GM12878 (cell line): ENCODE measurements at regions of chr2 and their contacts with region 1.

Region 1: GRCh38 chr2:246489-247144 is 17.2 kb downstream of the SH3YL1 start:
- DNase-seq: no peak
- ATAC-seq: peak; percentile 80
- H3K4me3 ChIP-seq: no peak overlapping the region
- H3K27ac ChIP-seq: no peak overlapping the region
- H3K4me1 ChIP-seq: no peaks in the 10 kb centered on the region
- H3K27me3 ChIP-seq: no peaks in the 10 kb centered on the region
- CTCF ChIP-seq: peak; percentile 47 to 53 (median 52); a peak in 4 of 6 replicates
- EP300 ChIP-seq: no peak
- POLR2A ChIP-seq: no peak
- RAD21 ChIP-seq: peak; percentile 39

Region 2: GRCh38 chr2:115303-115702 is 131.3 kb before region 1 on chr2:
- CTCF ChIA-PET with region 1: no interaction called
- POLR2A ChIA-PET with region 1: no interaction called
- RAD21 ChIA-PET with region 1: no interaction called
- SMC1A ChIA-PET with region 1: no interaction called
- in situ Hi-C with region 1: no loop called
- intact Hi-C with region 1: no loop called
- DNase-seq: no peak
- ATAC-seq: no peak
- H3K4me3 ChIP-seq: no peak overlapping the region
- H3K27ac ChIP-seq: no peak overlapping the region
- H3K4me1 ChIP-seq: no peaks in the 10 kb centered on the region
- H3K27me3 ChIP-seq: no peaks in the 10 kb centered on the region
- CTCF ChIP-seq: no peak
- EP300 ChIP-seq: no peak
- POLR2A ChIP-seq: no peak
- RAD21 ChIP-seq: no peak

Region 3: GRCh38 chr2:257429-257828 is 10.8 kb after region 1 on chr2:
- CTCF ChIA-PET with region 1: interaction called, 22 read pairs
- POLR2A ChIA-PET with region 1: no interaction called
- RAD21 ChIA-PET with region 1: no interaction called
- SMC1A ChIA-PET with region 1: interaction called, 13 read pairs
- in situ Hi-C with region 1: no loop called
- intact Hi-C with region 1: no loop called
- DNase-seq: no peak
- ATAC-seq: no peak
- H3K4me3 ChIP-seq: no peak overlapping the region
- H3K27ac ChIP-seq: no peak overlapping the region
- H3K4me1 ChIP-seq: no peaks in the 10 kb centered on the region
- H3K27me3 ChIP-seq: no peaks in the 10 kb centered on the region
- CTCF ChIP-seq: no peak
- EP300 ChIP-seq: no peak
- POLR2A ChIP-seq: no peak
- RAD21 ChIP-seq: no peak

Region 4: DNA sequence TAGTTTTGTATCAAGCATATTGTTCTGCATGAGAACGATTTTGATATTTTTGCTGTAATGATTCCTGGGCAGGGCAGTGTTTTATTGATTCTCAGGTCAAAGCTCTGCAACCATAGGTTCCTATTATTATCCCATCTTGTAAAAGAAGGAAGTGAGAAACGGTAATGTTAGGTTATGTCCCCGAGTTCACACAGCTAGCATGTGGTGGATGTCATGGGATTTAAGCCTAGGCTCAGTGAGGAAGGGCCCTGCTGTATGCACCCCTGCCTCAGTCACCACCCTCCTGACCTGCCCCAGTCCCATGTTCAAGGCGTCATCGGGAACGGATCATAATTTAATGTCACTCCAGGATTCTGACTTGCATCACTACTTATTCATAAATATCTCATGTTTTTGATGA is 28.8 kb after region 1 on chr2:
- CTCF ChIA-PET with region 1: interaction called, 33 read pairs
- POLR2A ChIA-PET with region 1: no interaction called
- RAD21 ChIA-PET with region 1: interaction called, 7 read pairs
- SMC1A ChIA-PET with region 1: interaction called, 3 read pairs
- in situ Hi-C with region 1: no loop called
- intact Hi-C with region 1: no loop called
- DNase-seq: peak; percentile 21
- ATAC-seq: peak; percentile 94
- H3K4me3 ChIP-seq: no peak overlapping the region
- H3K27ac ChIP-seq: no peak overlapping the region
- H3K4me1 ChIP-seq: peaks cover 12% of the 10 kb centered on the region
- H3K27me3 ChIP-seq: no peaks in the 10 kb centered on the region
- CTCF ChIP-seq: no peak
- EP300 ChIP-seq: peak; percentile 27 to 54; a peak in 3 of 4 replicates
- POLR2A ChIP-seq: no peak
- RAD21 ChIP-seq: no peak

Region 5: GRCh38 chr2:290090-290722 is 43.6 kb after region 1 on chr2:
- CTCF ChIA-PET with region 1: interaction called, 3 read pairs
- POLR2A ChIA-PET with region 1: no interaction called
- RAD21 ChIA-PET with region 1: interaction called, 7 read pairs
- SMC1A ChIA-PET with region 1: no interaction called
- in situ Hi-C with region 1: no loop called
- intact Hi-C with region 1: loop called (anchors 1 kb)
- DNase-seq: no peak
- ATAC-seq: peak; percentile 77
- H3K4me3 ChIP-seq: peak overlapping the region; percentile 20; the same call in 1 of the 2 replicates
- H3K27ac ChIP-seq: no peak overlapping the region
- H3K4me1 ChIP-seq: no peaks in the 10 kb centered on the region
- H3K27me3 ChIP-seq: peaks cover 2 to 3% of the 10 kb centered on the region in 2 experiments; a peak in 2 of 4 replicates
- CTCF ChIP-seq: peak; percentile 65 to 77 (median 66)
- EP300 ChIP-seq: no peak
- POLR2A ChIP-seq: no peak
- RAD21 ChIP-seq: peak; percentile 66

Region 6: DNA sequence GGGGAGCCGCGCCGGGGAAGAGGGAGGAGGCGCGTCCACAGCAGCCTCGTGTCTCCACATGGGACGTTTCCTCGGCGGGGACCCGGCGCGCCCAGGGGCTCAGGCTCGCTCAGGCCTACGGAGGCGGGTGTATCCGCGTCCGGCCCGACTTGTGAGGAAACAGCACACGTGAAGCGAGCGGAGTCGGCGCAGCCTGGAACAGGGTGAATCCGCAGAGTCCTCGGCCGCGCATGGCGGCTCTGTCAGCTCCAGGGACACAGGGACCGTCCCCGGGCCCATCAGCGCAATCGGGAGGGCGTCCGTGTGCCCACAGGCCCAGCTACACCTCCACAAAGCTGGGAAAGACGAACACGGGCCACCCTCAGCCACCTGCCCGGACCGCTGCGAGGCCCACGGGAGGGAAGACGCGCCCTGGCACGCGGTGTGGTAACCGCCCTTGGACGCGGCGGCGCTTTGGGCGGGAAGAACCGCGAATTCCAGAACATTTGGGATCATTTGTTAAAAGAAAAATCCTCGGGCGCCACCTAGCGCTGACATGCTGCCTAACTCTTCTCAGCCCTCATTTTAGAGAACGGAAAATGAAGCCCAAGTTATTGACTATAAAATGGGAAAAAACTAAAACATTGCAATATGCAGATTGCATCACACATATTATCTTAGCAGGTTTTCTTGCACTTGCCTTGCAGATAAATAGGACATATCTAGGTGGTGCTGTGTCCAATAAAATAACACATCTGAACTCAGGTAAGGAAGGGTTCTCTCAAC is 390.2 kb after region 1 on chr2:
- CTCF ChIA-PET with region 1: interaction called, 6 read pairs
- POLR2A ChIA-PET with region 1: no interaction called
- RAD21 ChIA-PET with region 1: interaction called, 6 read pairs
- SMC1A ChIA-PET with region 1: interaction called, 9 read pairs
- in situ Hi-C with region 1: loop called (anchors 10 kb)
- intact Hi-C with region 1: loop called (anchors 2 kb)
- DNase-seq: no peak
- ATAC-seq: peak; percentile 76
- H3K4me3 ChIP-seq: no peak overlapping the region
- H3K27ac ChIP-seq: no peak overlapping the region
- H3K4me1 ChIP-seq: no peaks in the 10 kb centered on the region
- H3K27me3 ChIP-seq: no peaks in the 10 kb centered on the region; a peak in 1 of 4 replicates
- CTCF ChIP-seq: peak; percentile 73 to 83 (median 83)
- EP300 ChIP-seq: no peak
- POLR2A ChIP-seq: no peak
- RAD21 ChIP-seq: peak; percentile 73

Region 7: GRCh38 chr2:1550658-1551316 is 1304.2 kb after region 1 on chr2:
- CTCF ChIA-PET with region 1: no interaction called
- POLR2A ChIA-PET with region 1: no interaction called
- RAD21 ChIA-PET with region 1: no interaction called
- SMC1A ChIA-PET with region 1: no interaction called
- in situ Hi-C with region 1: no loop called
- intact Hi-C with region 1: loop called (anchors 5 kb)
- DNase-seq: no peak
- ATAC-seq: peak; percentile 97
- H3K4me3 ChIP-seq: no peak overlapping the region
- H3K27ac ChIP-seq: no peak overlapping the region
- H3K4me1 ChIP-seq: no peaks in the 10 kb centered on the region
- H3K27me3 ChIP-seq: no peaks in the 10 kb centered on the region
- CTCF ChIP-seq: peak; percentile 75 to 92 (median 90)
- EP300 ChIP-seq: no peak
- POLR2A ChIP-seq: no peak
- RAD21 ChIP-seq: peak; percentile 61